ENCODE measurements at regions of chr19 and their contacts with region 1.

Region 1: GRCh38 chr19:32188921-32189320 is 156.5 kb upstream of the ZNF507 start:
- DNase-seq: no peak
- ATAC-seq: no peak
- H3K4me3 Mint-ChIP-seq: no peak overlapping the region
- H3K27ac Mint-ChIP-seq: no peak overlapping the region
- H3K4me1 Mint-ChIP-seq: no peaks in the 10 kb centered on the region
- H3K27me3 Mint-ChIP-seq: no peaks in the 10 kb centered on the region
- CTCF ChIP-seq: no peak

Region 2: GRCh38 chr19:32038021-32038920 is 150.7 kb before region 1 on chr19:
- CTCF ChIA-PET with region 1: no interaction called
- POLR2A ChIA-PET with region 1: no interaction called
- intact Hi-C with region 1: no loop called
- DNase-seq: no peak
- ATAC-seq: no peak
- H3K4me3 Mint-ChIP-seq: no peak overlapping the region
- H3K27ac Mint-ChIP-seq: no peak overlapping the region
- H3K4me1 Mint-ChIP-seq: no peaks in the 10 kb centered on the region
- H3K27me3 Mint-ChIP-seq: peaks cover 5% of the 10 kb centered on the region
- CTCF ChIP-seq: no peak

Region 3: DNA sequence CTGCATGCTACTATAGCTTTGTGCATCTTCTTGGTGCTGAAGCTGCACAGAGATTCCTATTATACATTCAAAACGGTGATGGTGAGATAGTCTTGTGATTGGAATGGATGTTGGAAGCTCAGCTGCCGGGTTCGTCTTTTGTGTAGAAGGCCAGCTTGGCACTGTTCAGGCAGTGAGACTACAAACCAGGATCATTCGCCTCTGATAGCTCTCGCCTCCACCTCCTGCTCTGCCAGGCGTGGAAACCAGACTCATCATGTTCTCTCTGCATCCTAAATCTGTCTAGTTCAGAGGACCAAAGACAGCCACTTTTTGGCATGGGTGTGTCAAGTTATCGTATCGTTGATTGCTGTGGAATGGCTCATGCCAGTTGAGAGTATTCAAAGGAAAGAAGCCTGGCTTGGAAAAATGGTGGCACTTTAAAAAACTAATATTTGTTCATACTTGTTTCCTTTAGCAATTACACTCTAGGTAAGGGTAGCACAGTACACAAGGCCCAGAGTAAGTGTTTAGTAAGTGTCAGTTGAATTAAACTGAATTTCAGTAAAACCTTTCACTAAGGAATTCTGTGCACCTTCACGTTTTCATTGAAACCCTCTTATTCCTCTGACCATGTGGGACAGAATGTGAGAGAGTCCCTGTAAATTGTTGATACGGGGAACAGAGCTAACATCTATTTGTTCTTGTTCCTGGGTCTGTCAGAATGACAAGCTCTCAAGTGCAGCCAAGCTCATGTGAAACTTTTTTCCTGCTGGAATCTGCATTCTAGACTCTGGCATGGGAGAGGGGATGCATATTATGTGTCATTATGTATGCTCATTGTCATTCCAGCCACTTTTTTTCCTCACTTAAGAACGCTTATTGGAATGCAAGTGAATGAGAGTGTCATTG is 286.5 kb after region 1 on chr19:
- CTCF ChIA-PET with region 1: no interaction called
- POLR2A ChIA-PET with region 1: interaction called, 14 read pairs
- intact Hi-C with region 1: no loop called
- DNase-seq: no peak
- ATAC-seq: no peak
- H3K4me3 Mint-ChIP-seq: no peak overlapping the region
- H3K27ac Mint-ChIP-seq: no peak overlapping the region
- H3K4me1 Mint-ChIP-seq: no peaks in the 10 kb centered on the region
- H3K27me3 Mint-ChIP-seq: no peaks in the 10 kb centered on the region
- CTCF ChIP-seq: no peak

Measured in activated B cell treated with CpG ODN at 0.5 μM for 24 hours (primary cell).